Activated CD4-positive, alpha-beta T cell treated with anti-CD3 and anti-CD28 coated beads, Interleukin-2, amount 10 ng/mL, durations not matched to agents 24 days and 14 days (primary cell): ENCODE measurements at regions of chrX and their contacts with region 1.

Region 1: GRCh38 chrX:50905334-50905733 is 5.2 kb upstream of the BMP15 start:
- DNase-seq: peak; percentile 55
- H3K4me3 Mint-ChIP-seq: no peak overlapping the region
- H3K27ac Mint-ChIP-seq: no peak overlapping the region
- H3K4me1 Mint-ChIP-seq: no peaks in the 10 kb centered on the region
- H3K27me3 Mint-ChIP-seq: no peaks in the 10 kb centered on the region

Region 2: GRCh38 chrX:50747471-50747900 is 157.8 kb before region 1 on chrX:
- intact Hi-C with region 1: loop called (anchors 5 kb)
- DNase-seq: peak; percentile 50
- H3K4me3 Mint-ChIP-seq: no peak overlapping the region
- H3K27ac Mint-ChIP-seq: no peak overlapping the region
- H3K4me1 Mint-ChIP-seq: no peaks in the 10 kb centered on the region
- H3K27me3 Mint-ChIP-seq: peaks cover 3% of the 10 kb centered on the region